ENCODE measurements at regions of chr6 and their contacts with region 1.

Region 1: GRCh38 chr6:41027799-41028628 is 11.0 kb downstream of the UNC5CL start:
- DNase-seq: peak; percentile 38 to 92 (median 73)
- ATAC-seq: peak; percentile 94
- H3K4me3 ChIP-seq: peak overlapping the region; percentile 70
- H3K4me3 Mint-ChIP-seq: peak overlapping the region; percentile 86 to 91 (median 88)
- H3K27ac ChIP-seq: peak overlapping the region; percentile 53
- H3K27ac Mint-ChIP-seq: peak overlapping the region; percentile 69 to 92 (median 87)
- H3K4me1 ChIP-seq: peaks cover 6 to 16% of the 10 kb centered on the region in 2 donors
- H3K4me1 Mint-ChIP-seq: peaks cover 17 to 25% (median 22%) of the 10 kb centered on the region in 7 donors
- H3K27me3 ChIP-seq: no peaks in the 10 kb centered on the region
- H3K27me3 Mint-ChIP-seq: no peaks in the 10 kb centered on the region

Region 2: DNA sequence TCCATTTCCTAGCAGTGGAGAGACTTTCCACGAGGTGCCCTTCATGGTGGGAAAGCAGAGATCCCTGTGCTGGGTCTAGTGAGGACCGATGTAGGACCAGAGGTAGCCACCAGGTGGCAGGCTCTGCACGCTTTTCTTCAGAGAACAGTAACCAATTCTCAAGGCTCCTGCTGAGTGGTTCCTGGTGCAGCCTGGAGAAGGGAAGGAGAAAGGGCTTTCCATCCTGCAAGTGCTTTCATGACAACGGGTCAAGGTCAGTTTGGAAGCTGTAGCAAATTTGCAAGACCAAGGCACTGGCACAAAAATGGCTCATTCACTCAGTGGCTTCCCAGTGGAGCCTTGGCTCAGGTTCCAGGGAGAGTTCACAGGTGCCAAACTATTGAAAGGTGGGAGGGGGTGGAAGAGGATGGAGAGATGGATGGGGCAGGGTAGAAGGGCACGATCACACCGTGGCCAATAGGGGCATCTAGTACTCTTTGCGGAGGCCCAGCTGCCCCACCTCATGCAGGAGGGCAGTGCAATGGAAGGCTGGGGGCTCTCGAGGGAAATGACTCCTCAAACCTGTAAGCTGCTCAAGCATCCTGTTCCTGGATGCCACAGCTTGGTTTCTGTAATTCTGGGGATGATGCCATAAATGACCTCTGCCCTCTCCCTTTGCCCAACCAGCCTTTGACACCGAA is 1680.0 kb before region 1 on chr6:
- CTCF ChIA-PET with region 1: no interaction called
- POLR2A ChIA-PET with region 1: no interaction called
- intact Hi-C with region 1: loop called in 1 of 2 experiments (anchors 10 kb)
- DNase-seq: peak in 7 of 9 donors; percentile 16 to 63 (median 31)
- ATAC-seq: peak; percentile 75
- H3K4me3 ChIP-seq: no peak overlapping the region
- H3K4me3 Mint-ChIP-seq: no peak overlapping the region
- H3K27ac ChIP-seq: no peak overlapping the region
- H3K27ac Mint-ChIP-seq: peak overlapping the region in 2 of 9 donors; percentile 18 to 60
- H3K4me1 ChIP-seq: no peaks in the 10 kb centered on the region
- H3K4me1 Mint-ChIP-seq: peaks cover 0 to 4% (median 0%) of the 10 kb centered on the region in 7 donors
- H3K27me3 ChIP-seq: no peaks in the 10 kb centered on the region
- H3K27me3 Mint-ChIP-seq: peaks cover 0 to 5% (median 0%) of the 10 kb centered on the region in 5 donors

Region 3: DNA sequence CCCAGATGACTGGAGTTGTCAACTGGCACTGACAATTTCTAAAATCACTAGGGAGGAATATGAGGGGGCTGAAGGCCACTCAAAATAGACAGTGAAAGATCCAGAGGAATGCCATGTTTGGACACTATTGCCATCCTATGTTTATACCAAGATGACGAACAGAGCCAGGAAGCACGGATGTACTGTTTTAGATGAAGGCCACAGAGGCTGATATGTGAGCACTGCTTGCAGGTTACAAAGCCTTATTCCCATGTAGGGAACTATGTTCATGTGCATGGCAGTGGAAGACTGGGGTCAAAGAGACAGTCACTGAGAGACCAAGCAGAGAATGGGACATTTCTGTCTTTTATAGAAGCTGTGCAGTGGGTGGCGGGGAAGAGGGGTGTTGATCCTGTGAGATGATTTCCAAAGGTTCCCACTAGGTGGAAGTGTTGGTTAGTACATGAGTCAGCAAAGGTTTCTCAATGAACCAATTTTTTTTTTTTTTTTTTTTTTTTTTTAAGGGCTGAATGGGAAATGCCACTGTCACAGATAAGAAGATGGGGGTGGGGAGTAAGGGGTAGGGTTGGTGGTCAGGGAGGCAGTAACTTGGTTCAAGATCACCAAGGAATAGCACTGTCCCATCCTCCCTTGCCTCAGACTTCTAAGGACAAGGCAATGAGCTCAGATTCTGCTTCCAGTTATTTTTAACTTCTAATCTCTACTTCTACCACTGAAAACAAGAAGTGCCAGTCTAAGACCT is 1047.0 kb before region 1 on chr6:
- CTCF ChIA-PET with region 1: no interaction called
- POLR2A ChIA-PET with region 1: no interaction called
- intact Hi-C with region 1: loop called in 1 of 2 experiments (anchors 5 kb)
- DNase-seq: peak in 3 of 9 donors; percentile 2 to 23 (median 5)
- ATAC-seq: no peak
- H3K4me3 ChIP-seq: no peak overlapping the region
- H3K4me3 Mint-ChIP-seq: no peak overlapping the region
- H3K27ac ChIP-seq: no peak overlapping the region
- H3K27ac Mint-ChIP-seq: no peak overlapping the region
- H3K4me1 ChIP-seq: no peaks in the 10 kb centered on the region
- H3K4me1 Mint-ChIP-seq: no peaks in the 10 kb centered on the region
- H3K27me3 ChIP-seq: no peaks in the 10 kb centered on the region
- H3K27me3 Mint-ChIP-seq: peaks cover 14 to 32% (median 25%) of the 10 kb centered on the region in 5 donors

Region 4: DNA sequence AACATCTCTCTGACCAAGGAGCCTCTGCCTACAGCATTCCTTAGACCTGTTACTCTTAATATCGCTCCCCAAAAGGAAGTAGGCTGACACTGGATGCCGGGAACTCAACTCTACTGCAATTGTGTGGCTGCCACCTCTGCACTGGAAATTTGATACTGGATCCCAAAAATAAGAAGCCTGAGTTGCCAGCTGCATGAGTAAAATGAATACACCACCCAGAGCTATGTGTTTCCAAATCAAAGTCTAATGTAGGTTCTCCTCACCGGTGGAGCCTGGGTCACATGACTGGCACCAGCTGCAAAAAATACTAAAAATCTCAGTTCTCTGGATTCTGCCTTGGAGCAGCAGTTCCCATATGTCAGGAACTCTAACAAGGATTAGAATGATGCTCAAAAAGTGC is 25.8 kb before region 1 on chr6:
- CTCF ChIA-PET with region 1: interaction called, 18 read pairs
- POLR2A ChIA-PET with region 1: no interaction called
- intact Hi-C with region 1: loop called (anchors 1 kb)
- DNase-seq: no peak
- ATAC-seq: no peak
- H3K4me3 ChIP-seq: no peak overlapping the region
- H3K4me3 Mint-ChIP-seq: no peak overlapping the region
- H3K27ac ChIP-seq: no peak overlapping the region
- H3K27ac Mint-ChIP-seq: no peak overlapping the region
- H3K4me1 ChIP-seq: no peaks in the 10 kb centered on the region
- H3K4me1 Mint-ChIP-seq: peaks cover 0 to 6% (median 4%) of the 10 kb centered on the region in 7 donors
- H3K27me3 ChIP-seq: no peaks in the 10 kb centered on the region
- H3K27me3 Mint-ChIP-seq: peaks cover 26 to 56% (median 28%) of the 10 kb centered on the region in 5 donors

Region 5: DNA sequence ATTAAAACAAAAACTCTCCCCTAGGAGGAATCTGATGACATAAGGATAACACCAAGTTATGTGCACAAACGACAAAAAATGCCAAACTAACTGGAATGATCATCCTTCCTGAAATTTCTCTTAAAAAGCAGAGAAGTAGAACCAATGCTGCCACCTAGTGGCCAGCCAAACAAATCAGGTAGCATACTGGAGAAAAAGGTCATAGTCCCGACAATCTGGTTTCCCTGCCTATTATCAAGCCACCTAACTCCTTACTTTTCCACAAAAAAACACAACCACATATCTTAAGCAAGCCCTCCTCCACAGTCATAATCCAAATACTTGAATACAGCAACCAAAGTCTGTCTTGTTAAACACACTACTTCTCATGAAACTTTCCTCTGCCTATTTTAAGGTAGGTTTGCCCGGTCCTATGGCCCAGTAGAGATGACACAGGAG is 38.9 kb after region 1 on chr6:
- CTCF ChIA-PET with region 1: interaction called, 7 read pairs
- POLR2A ChIA-PET with region 1: interaction called, 3 read pairs
- intact Hi-C with region 1: loop called (anchors 1 kb)
- DNase-seq: peak; percentile 26 to 62 (median 51)
- ATAC-seq: no peak
- H3K4me3 ChIP-seq: no peak overlapping the region
- H3K4me3 Mint-ChIP-seq: no peak overlapping the region
- H3K27ac ChIP-seq: no peak overlapping the region
- H3K27ac Mint-ChIP-seq: peak overlapping the region in 6 of 9 donors; percentile 1 to 79 (median 28)
- H3K4me1 ChIP-seq: peaks cover 5 to 9% of the 10 kb centered on the region in 2 donors
- H3K4me1 Mint-ChIP-seq: peaks cover 21 to 46% (median 38%) of the 10 kb centered on the region in 7 donors
- H3K27me3 ChIP-seq: no peaks in the 10 kb centered on the region
- H3K27me3 Mint-ChIP-seq: no peaks in the 10 kb centered on the region